ENCODE measurements at regions of chr6 and their contacts with region 1.

Region 1: GRCh38 chr6:5315881-5316280 is 54.6 kb downstream of the FARS2 start:
- DNase-seq: no peak
- ATAC-seq: no peak
- H3K4me3 ChIP-seq: no peak overlapping the region
- H3K27ac ChIP-seq: no peak overlapping the region
- H3K4me1 ChIP-seq: no peaks in the 10 kb centered on the region
- H3K27me3 ChIP-seq: no peaks in the 10 kb centered on the region
- CTCF ChIP-seq: no peak

Region 2: DNA sequence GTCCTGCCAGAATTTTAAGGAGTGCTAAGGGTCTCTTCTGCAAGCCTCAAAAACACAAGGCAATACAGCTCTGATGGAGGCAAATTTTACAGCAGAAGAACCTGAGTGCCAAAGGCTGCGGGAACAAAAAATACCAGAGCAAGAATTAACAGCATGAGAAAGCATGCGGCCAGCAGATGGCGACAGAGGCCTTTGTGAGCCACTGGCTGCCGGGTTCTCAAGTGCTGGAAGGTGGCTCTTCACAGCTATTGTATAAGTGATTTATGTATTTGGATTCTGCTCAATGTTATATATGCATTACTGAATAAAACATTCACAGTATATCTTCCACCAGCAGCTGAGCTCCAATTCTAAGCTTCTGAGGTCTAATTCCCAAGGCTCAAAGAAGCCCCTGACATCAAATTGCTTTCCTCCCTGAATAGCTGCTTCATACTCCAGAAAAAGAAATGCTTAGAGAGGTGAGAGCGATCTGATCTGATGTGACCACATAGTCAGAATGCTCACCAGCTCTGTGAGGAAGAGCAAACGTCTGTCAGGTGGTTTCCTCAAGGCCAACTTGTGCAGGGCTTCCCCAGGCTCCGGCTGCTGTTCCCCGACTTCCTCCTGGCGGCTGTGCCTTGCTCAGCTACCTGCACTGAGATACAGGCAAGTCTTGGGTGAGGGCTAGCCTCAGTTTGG is 172.1 kb before region 1 on chr6:
- CTCF ChIA-PET with region 1: no interaction called
- POLR2A ChIA-PET with region 1: no interaction called
- in situ Hi-C with region 1: no loop called
- intact Hi-C with region 1: no loop called
- DNase-seq: peak; percentile 46
- ATAC-seq: peak; percentile 90
- H3K4me3 ChIP-seq: no peak overlapping the region
- H3K27ac ChIP-seq: no peak overlapping the region
- H3K4me1 ChIP-seq: no peaks in the 10 kb centered on the region
- H3K27me3 ChIP-seq: no peaks in the 10 kb centered on the region
- CTCF ChIP-seq: peak; percentile 95

Region 3: GRCh38 chr6:5331845-5332442 is 16.1 kb after region 1 on chr6:
- CTCF ChIA-PET with region 1: no interaction called
- POLR2A ChIA-PET with region 1: interaction called, 15 read pairs
- in situ Hi-C with region 1: no loop called
- intact Hi-C with region 1: no loop called
- DNase-seq: no peak
- ATAC-seq: no peak
- H3K4me3 ChIP-seq: no peak overlapping the region
- H3K27ac ChIP-seq: no peak overlapping the region
- H3K4me1 ChIP-seq: no peaks in the 10 kb centered on the region
- H3K27me3 ChIP-seq: no peaks in the 10 kb centered on the region
- CTCF ChIP-seq: no peak

Region 4: DNA sequence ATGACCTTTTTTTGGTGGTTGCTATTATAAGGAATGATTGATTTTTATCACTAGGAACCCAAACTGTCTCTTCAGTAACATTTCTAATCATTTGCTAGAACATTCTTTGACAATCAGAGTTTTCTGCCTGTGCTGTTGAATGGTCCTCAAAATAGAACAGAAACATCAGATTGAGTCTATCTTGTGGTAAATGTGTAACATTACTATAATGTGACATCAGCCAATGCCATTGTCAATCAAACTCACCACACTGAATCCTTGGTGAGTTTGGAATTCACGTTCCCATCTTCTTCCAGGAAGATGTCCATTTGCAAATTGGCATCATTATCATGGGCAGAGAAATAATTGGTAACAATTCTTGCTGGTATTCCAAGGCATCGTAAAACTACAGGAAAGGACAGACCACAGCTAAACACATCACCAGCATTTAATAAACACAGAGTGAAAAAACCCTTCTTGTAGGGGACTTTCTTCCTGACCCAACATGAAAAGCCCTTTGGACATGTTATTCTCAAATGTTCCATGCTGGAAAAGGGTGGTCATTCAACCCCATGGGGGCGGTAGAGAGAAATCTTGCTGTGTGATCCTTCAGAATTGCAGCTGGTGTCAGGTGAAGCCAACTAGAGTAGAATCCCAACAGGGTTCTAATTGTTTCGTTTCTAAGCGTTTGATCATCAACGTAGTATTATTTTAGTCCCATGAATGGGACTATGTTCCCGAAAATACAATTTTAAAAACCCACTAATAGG is 906.1 kb after region 1 on chr6:
- CTCF ChIA-PET with region 1: no interaction called
- POLR2A ChIA-PET with region 1: no interaction called
- in situ Hi-C with region 1: no loop called
- intact Hi-C with region 1: no loop called
- DNase-seq: no peak
- ATAC-seq: no peak
- H3K4me3 ChIP-seq: no peak overlapping the region
- H3K27ac ChIP-seq: no peak overlapping the region
- H3K4me1 ChIP-seq: no peaks in the 10 kb centered on the region
- H3K27me3 ChIP-seq: no peaks in the 10 kb centered on the region; the same call in 1 of the 2 replicates
- CTCF ChIP-seq: peak; percentile 28

Measured in Panc1 (cell line).